Activated CD4-positive, alpha-beta memory T cell treated with anti-CD3 and anti-CD28 coated beads for 36 hours (primary cell): ENCODE measurements at regions of chr1 and their contacts with region 1.

Region 1: GRCh38 chr1:13950637-13951036 is 250.6 kb downstream of the PRDM2 start:
- DNase-seq: peak; percentile 12
- H3K4me3 Mint-ChIP-seq: no peak overlapping the region
- H3K27ac Mint-ChIP-seq: no peak overlapping the region
- H3K4me1 Mint-ChIP-seq: no peaks in the 10 kb centered on the region
- H3K27me3 Mint-ChIP-seq: peaks cover 2% of the 10 kb centered on the region

Region 2: GRCh38 chr1:13830616-13831280 is 119.9 kb before region 1 on chr1:
- CTCF ChIA-PET with region 1: no interaction called
- POLR2A ChIA-PET with region 1: no interaction called
- intact Hi-C with region 1: loop called (anchors 10 kb)
- DNase-seq: no peak
- H3K4me3 Mint-ChIP-seq: no peak overlapping the region
- H3K27ac Mint-ChIP-seq: no peak overlapping the region
- H3K4me1 Mint-ChIP-seq: peaks cover 6% of the 10 kb centered on the region
- H3K27me3 Mint-ChIP-seq: peaks cover 9% of the 10 kb centered on the region